ENCODE measurements at regions of chr11 and their contacts with region 1.

Region 1: GRCh38 chr11:46826310-46827044 is 19.6 kb downstream of the CKAP5 start:
- DNase-seq: peak; percentile 56 to 79 (median 70)
- ATAC-seq: peak; percentile 100
- H3K4me3 Mint-ChIP-seq: peak overlapping the region; percentile 81 to 91 (median 85)
- H3K27ac Mint-ChIP-seq: peak overlapping the region; percentile 7 to 91 (median 69)
- H3K4me1 Mint-ChIP-seq: peaks cover 12 to 33% (median 31%) of the 10 kb centered on the region in 4 donors
- H3K27me3 Mint-ChIP-seq: no peaks in the 10 kb centered on the region

Region 2: DNA sequence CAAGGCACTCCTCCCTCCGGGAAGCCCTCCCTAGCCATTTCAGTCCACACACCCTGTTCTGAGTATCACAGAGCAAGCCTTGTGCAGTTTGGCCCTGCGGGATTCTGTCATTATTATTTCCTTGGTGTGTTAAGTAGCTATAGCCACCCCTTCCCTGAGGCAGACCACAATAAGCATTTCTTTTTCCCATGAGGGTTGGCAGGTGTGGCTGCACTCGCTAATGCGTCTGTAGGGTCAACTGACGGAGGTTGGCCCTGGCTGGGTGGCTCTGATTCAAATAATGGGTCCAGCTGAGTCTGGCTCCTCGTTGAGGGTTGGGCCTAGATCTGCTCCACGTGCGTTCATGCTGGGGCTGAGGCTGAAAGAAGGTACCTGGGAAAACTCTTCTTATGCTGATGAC is 102.4 kb before region 1 on chr11:
- POLR2A ChIA-PET with region 1: no interaction called
- DNase-seq: no peak
- ATAC-seq: no peak
- H3K4me3 Mint-ChIP-seq: no peak overlapping the region
- H3K27ac Mint-ChIP-seq: no peak overlapping the region
- H3K4me1 Mint-ChIP-seq: no peaks in the 10 kb centered on the region
- H3K27me3 Mint-ChIP-seq: peaks cover 0 to 3% (median 0%) of the 10 kb centered on the region in 5 donors

Region 3: GRCh38 chr11:46845740-46846509 is 19.4 kb after region 1 on chr11 and contains the start of gene CKAP5:
- POLR2A ChIA-PET with region 1: interaction called, 10 read pairs
- DNase-seq: peak; percentile 68 to 90 (median 82)
- ATAC-seq: peak; percentile 89 to 91
- H3K4me3 Mint-ChIP-seq: peak within 1 kb of the TSS; percentile 93 to 99 (median 98)
- H3K27ac Mint-ChIP-seq: peak within 1 kb of the TSS; percentile 84 to 97 (median 96)
- H3K4me1 Mint-ChIP-seq: peaks cover 19 to 42% (median 41%) of the 10 kb centered on the region in 4 donors
- H3K27me3 Mint-ChIP-seq: no peaks in the 10 kb centered on the region
- polyA plus RNA-seq, gene CKAP5: 10.7 to 17.2 (median 11.0) TPM

Region 4: GRCh38 chr11:46991391-46991790 is 164.9 kb after region 1 on chr11:
- POLR2A ChIA-PET with region 1: no interaction called
- DNase-seq: no peak
- ATAC-seq: no peak
- H3K4me3 Mint-ChIP-seq: no peak overlapping the region
- H3K27ac Mint-ChIP-seq: no peak overlapping the region
- H3K4me1 Mint-ChIP-seq: peaks cover 0 to 5% (median 0%) of the 10 kb centered on the region in 4 donors
- H3K27me3 Mint-ChIP-seq: no peaks in the 10 kb centered on the region